PC-3 (cell line): ENCODE measurements at regions of chr19 and their contacts with region 1.

Region 1: GRCh38 chr19:6273701-6274601 is 5.8 kb downstream of the MLLT1 start:
- DNase-seq: peak; percentile 95
- ATAC-seq: peak; percentile 79
- H3K4me3 ChIP-seq: peak overlapping the region; percentile 55
- H3K27ac ChIP-seq: peak overlapping the region; percentile 79
- H3K4me1 ChIP-seq: peaks cover 71% of the 10 kb centered on the region
- H3K27me3 ChIP-seq: no peaks in the 10 kb centered on the region
- CTCF ChIP-seq: no peak

Region 2: GRCh38 chr19:6218491-6219162 is 55.3 kb before region 1 on chr19:
- CTCF ChIA-PET with region 1: interaction called, 3 read pairs
- POLR2A ChIA-PET with region 1: no interaction called
- intact Hi-C with region 1: loop called (anchors 5 kb)
- DNase-seq: peak; percentile 92
- ATAC-seq: peak; percentile 85
- H3K4me3 ChIP-seq: no peak overlapping the region
- H3K27ac ChIP-seq: no peak overlapping the region
- H3K4me1 ChIP-seq: no peaks in the 10 kb centered on the region; the same call in 1 of the 2 replicates
- H3K27me3 ChIP-seq: no peaks in the 10 kb centered on the region
- CTCF ChIP-seq: peak; percentile 96

Region 3: GRCh38 chr19:6238643-6239281 is 35.2 kb before region 1 on chr19:
- CTCF ChIA-PET with region 1: interaction called, 5 read pairs
- POLR2A ChIA-PET with region 1: no interaction called
- intact Hi-C with region 1: loop called (anchors 5 kb)
- DNase-seq: peak; percentile 46
- ATAC-seq: peak; percentile 72
- H3K4me3 ChIP-seq: no peak overlapping the region
- H3K27ac ChIP-seq: peak overlapping the region; percentile 10; the same call in 1 of the 2 replicates
- H3K4me1 ChIP-seq: peaks cover 29% of the 10 kb centered on the region
- H3K27me3 ChIP-seq: no peaks in the 10 kb centered on the region
- CTCF ChIP-seq: no peak

Region 4: DNA sequence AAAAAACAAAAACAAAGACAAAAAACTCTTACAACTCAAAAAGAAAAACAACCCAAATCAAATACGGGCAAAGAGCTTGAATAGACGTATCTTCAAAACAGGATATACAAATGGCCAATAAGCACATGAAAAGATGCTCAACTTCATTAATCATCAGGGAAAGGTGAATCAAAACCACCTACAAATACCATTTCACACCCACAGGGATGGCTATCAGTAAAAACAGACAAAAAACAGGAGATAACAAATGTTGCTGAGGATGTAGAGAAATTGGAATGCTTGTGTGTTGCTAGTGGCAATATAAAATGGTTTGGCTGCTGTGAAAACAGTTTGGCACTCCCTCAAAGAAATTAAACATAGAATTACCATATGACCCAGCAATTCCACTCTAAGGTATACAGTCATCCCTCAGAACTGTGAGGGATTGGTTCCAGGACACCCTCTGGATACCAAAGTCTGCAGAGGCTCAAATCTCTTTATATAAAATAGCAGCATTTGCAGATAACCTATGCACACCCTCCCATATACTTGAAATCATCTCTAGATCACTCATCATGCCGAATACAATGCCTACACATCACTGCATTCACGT is 23.8 kb before region 1 on chr19:
- CTCF ChIA-PET with region 1: no interaction called
- POLR2A ChIA-PET with region 1: no interaction called
- intact Hi-C with region 1: no loop called
- DNase-seq: no peak
- ATAC-seq: peak; percentile 31
- H3K4me3 ChIP-seq: no peak overlapping the region
- H3K27ac ChIP-seq: no peak overlapping the region
- H3K4me1 ChIP-seq: no peaks in the 10 kb centered on the region
- H3K27me3 ChIP-seq: no peaks in the 10 kb centered on the region
- CTCF ChIP-seq: no peak